Stomach (tissue), 19 donors: ENCODE measurements at regions of chr6 and their contacts with region 1.

Region 1: GRCh38 chr6:12605888-12606345 is 110.7 kb upstream of the PHACTR1 start:
- DNase-seq: peak; percentile 53 to 87
- H3K4me3 ChIP-seq: no peak overlapping the region
- H3K27ac ChIP-seq: no peak overlapping the region
- H3K4me1 ChIP-seq: peaks cover 0 to 12% (median 0%) of the 10 kb centered on the region in 4 donors
- H3K27me3 ChIP-seq: peaks cover 0 to 9% (median 0%) of the 10 kb centered on the region in 3 donors
- CTCF ChIP-seq: peak in 5 of 7 experiments; percentile 30 to 72 (median 43)
- EP300 ChIP-seq: no peak
- POLR2A ChIP-seq: no peak

Region 2: DNA sequence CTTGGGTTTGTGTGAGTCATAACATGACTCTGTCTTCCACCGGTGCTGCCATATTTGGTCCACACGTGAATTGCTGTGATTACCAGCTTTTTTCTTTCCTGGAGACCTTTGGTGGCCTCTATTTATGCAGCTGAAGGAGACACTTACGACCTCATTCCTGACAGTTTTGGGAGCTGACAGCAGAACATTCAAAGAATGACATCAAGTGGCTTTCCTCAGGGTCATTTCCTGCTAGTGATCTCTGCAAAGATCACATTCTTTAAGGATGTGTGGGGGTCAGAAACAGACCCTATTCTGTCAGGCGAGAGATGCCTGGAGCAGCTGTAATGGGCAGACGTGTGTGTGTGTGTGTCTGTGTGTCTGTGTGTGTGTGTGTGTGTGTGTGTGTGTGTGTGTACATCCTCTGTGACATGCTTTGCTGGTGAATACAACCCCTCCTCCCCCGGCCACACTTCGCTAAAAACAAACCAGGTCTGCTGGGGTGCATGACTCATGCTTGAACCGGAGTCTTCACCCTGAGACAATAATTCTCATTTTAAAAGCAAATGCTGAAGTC is 952.8 kb before region 1 on chr6:
- intact Hi-C with region 1: loop called (anchors 10 kb)
- DNase-seq: peak in 1 of 2 donors; percentile 63
- H3K4me3 ChIP-seq: no peak overlapping the region
- H3K27ac ChIP-seq: peak overlapping the region in 1 of 5 donors; percentile 38
- H3K4me1 ChIP-seq: peaks cover 0 to 31% (median 8%) of the 10 kb centered on the region in 4 donors
- H3K27me3 ChIP-seq: no peaks in the 10 kb centered on the region
- CTCF ChIP-seq: no peak
- EP300 ChIP-seq: no peak
- POLR2A ChIP-seq: no peak

Region 3: GRCh38 chr6:12776291-12776690 is 170.4 kb after region 1 on chr6:
- intact Hi-C with region 1: no loop called
- DNase-seq: no peak
- H3K4me3 ChIP-seq: no peak overlapping the region
- H3K27ac ChIP-seq: no peak overlapping the region
- H3K4me1 ChIP-seq: no peaks in the 10 kb centered on the region
- H3K27me3 ChIP-seq: peaks cover 0 to 16% (median 0%) of the 10 kb centered on the region in 3 donors
- CTCF ChIP-seq: no peak
- EP300 ChIP-seq: no peak
- POLR2A ChIP-seq: no peak